HepG2 (cell line): ENCODE measurements at regions of chrX and their contacts with region 1.

Region 1: DNA sequence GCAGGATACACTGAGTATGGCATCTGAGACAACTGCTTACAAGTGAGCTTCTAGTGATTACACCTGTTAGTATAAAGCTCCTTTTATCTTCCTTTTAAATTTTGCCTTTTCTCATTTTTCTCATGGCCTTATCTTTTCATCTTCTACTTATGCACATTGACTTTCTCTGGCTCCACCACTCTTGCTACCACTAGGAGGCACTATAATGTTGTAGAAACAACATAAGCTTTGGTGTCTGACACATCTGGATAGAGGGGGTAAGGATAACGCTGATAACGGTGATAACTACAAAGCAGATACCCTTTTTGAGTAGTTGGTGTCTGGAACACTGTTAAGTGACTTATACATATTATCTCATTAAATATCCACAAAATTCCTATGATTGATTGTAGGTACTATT is 187.4 kb upstream of the TEX13C start:
- DNase-seq: peak; percentile 0
- ATAC-seq: no peak
- H3K4me3 ChIP-seq: no peak overlapping the region
- H3K27ac ChIP-seq: no peak overlapping the region
- H3K4me1 ChIP-seq: no peaks in the 10 kb centered on the region
- H3K27me3 ChIP-seq: no peaks in the 10 kb centered on the region
- CTCF ChIP-seq: 0 out of 2 replicates have a peak, but pooled peaks have one; percentile 22
- EP300 ChIP-seq: no peak
- POLR2A ChIP-seq: no peak
- RAD21 ChIP-seq: no peak

Region 2: GRCh38 chrX:124388562-124388961 is 743.7 kb before region 1 on chrX:
- CTCF ChIA-PET with region 1: no interaction called
- POLR2A ChIA-PET with region 1: no interaction called
- in situ Hi-C with region 1: no loop called
- intact Hi-C with region 1: loop called (anchors 5 kb)
- DNase-seq: peak; percentile 9
- ATAC-seq: peak; percentile 60
- H3K4me3 ChIP-seq: no peak overlapping the region
- H3K27ac ChIP-seq: no peak overlapping the region
- H3K4me1 ChIP-seq: no peaks in the 10 kb centered on the region
- H3K27me3 ChIP-seq: no peaks in the 10 kb centered on the region
- CTCF ChIP-seq: peak; percentile 63
- EP300 ChIP-seq: no peak
- POLR2A ChIP-seq: no peak
- RAD21 ChIP-seq: no peak

Region 3: GRCh38 chrX:124406294-124407014 is 725.8 kb before region 1 on chrX:
- CTCF ChIA-PET with region 1: interaction called, 3 read pairs
- POLR2A ChIA-PET with region 1: no interaction called
- in situ Hi-C with region 1: loop called (anchors 10 kb)
- intact Hi-C with region 1: loop called (anchors 1 kb)
- DNase-seq: peak; percentile 31
- ATAC-seq: peak; percentile 79
- H3K4me3 ChIP-seq: no peak overlapping the region
- H3K27ac ChIP-seq: no peak overlapping the region
- H3K4me1 ChIP-seq: no peaks in the 10 kb centered on the region
- H3K27me3 ChIP-seq: 0 out of 5 replicates have a peak, but pooled peaks cover 0 to 1% of the 10 kb centered on the region in 2 experiments
- CTCF ChIP-seq: peak; percentile 64
- EP300 ChIP-seq: no peak
- POLR2A ChIP-seq: no peak
- RAD21 ChIP-seq: 0 out of 2 replicates have a peak, but pooled peaks have one; percentile 15

Region 4: DNA sequence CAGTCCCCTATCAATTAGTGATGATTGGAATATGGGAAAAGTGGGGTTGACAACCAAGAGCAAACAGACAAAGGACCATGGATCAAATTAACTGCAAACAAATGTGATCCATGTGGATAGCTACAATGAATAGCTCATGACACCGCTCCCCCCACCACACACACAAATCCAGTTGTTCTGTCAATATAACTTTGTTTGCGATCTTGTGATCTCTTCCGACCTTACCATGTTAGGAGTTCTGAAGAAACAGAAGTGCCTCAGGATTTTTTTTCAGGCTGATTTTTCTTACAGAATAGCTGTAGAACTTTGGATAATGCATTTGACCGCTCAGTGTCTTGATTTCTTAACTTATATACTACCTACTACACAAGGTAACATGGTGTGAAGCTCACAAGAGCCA is 669.4 kb before region 1 on chrX:
- CTCF ChIA-PET with region 1: no interaction called
- POLR2A ChIA-PET with region 1: no interaction called
- in situ Hi-C with region 1: no loop called
- intact Hi-C with region 1: no loop called
- DNase-seq: peak; percentile 44
- ATAC-seq: peak; percentile 63
- H3K4me3 ChIP-seq: no peak overlapping the region
- H3K27ac ChIP-seq: no peak overlapping the region
- H3K4me1 ChIP-seq: peaks cover 9% of the 10 kb centered on the region; the same call in 1 of the 2 replicates
- H3K27me3 ChIP-seq: no peaks in the 10 kb centered on the region
- CTCF ChIP-seq: no peak
- EP300 ChIP-seq: no peak
- POLR2A ChIP-seq: no peak
- RAD21 ChIP-seq: no peak